ENCODE measurements at regions of chr1 and their contacts with region 1.

Region 1: DNA sequence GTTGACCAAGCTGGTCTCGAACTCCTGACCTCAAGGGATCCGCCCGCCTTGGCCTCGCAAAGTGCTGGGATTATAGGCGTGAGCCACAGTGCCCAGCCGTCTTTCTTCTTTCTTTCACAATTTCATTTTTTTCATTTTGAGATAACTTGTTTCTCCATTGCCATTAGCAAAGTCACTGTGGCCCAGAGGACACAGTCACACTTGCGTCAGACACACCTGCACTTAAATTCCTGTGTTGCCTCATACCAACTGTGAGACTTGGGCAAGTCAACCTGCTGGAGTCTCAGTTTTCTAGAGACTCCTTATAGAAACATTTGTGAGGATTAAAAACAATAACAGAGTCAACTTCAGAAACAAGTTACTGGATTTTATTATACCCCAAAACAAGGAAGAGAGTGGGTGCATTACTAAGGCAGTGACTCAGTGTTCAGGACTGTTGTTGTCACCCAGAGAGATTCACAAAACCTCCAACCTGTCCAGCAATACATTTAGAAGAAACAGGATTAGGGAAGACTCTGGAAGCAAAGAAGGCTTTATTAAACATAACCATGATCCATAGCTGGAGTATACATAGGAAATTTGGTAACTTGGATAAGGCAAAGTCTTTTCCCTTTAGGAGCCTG is 2.6 kb downstream of the TEDDM1 start:
- DNase-seq: no peak
- ATAC-seq: no peak
- H3K4me3 ChIP-seq: no peak overlapping the region
- H3K27ac ChIP-seq: no peak overlapping the region
- H3K4me1 ChIP-seq: no peaks in the 10 kb centered on the region
- H3K27me3 ChIP-seq: no peaks in the 10 kb centered on the region
- CTCF ChIP-seq: no peak
- EP300 ChIP-seq: no peak
- POLR2A ChIP-seq: no peak
- RAD21 ChIP-seq: no peak

Region 2: DNA sequence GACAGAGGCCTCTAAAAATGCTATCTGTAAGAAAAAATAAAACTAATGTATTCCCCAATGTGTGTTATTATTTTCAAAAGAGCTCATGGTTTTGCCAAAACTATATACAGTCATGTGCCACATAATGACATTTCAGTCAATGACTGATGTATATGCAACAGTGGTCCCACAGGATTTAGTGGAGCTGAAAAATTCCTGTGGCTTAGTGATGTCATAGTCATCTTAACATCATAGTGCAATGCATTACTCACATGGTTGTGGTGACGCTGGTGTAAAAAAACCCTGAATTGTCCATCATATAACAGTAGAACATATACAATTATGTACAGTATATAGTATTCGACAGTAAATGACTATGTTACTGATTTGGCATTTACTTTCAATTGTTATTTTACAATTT is 742.1 kb before region 1 on chr1:
- CTCF ChIA-PET with region 1: no interaction called
- POLR2A ChIA-PET with region 1: no interaction called
- RAD21 ChIA-PET with region 1: no interaction called
- SMC1A ChIA-PET with region 1: no interaction called
- in situ Hi-C with region 1: no loop called
- intact Hi-C with region 1: no loop called
- DNase-seq: no peak
- ATAC-seq: peak; percentile 38
- H3K4me3 ChIP-seq: no peak overlapping the region
- H3K27ac ChIP-seq: no peak overlapping the region
- H3K4me1 ChIP-seq: no peaks in the 10 kb centered on the region
- H3K27me3 ChIP-seq: no peaks in the 10 kb centered on the region
- CTCF ChIP-seq: no peak
- EP300 ChIP-seq: no peak
- POLR2A ChIP-seq: no peak
- RAD21 ChIP-seq: no peak

Region 3: GRCh38 chr1:182084487-182085316 is 313.2 kb before region 1 on chr1:
- CTCF ChIA-PET with region 1: interaction called, 64 read pairs
- POLR2A ChIA-PET with region 1: no interaction called
- RAD21 ChIA-PET with region 1: interaction called, 17 read pairs
- SMC1A ChIA-PET with region 1: interaction called, 22 read pairs
- in situ Hi-C with region 1: loop called (anchors 5 kb)
- intact Hi-C with region 1: loop called (anchors 1 kb)
- DNase-seq: no peak
- ATAC-seq: peak; percentile 94
- H3K4me3 ChIP-seq: no peak overlapping the region
- H3K27ac ChIP-seq: no peak overlapping the region
- H3K4me1 ChIP-seq: no peaks in the 10 kb centered on the region
- H3K27me3 ChIP-seq: no peaks in the 10 kb centered on the region
- CTCF ChIP-seq: peak; percentile 67 to 75 (median 74)
- EP300 ChIP-seq: no peak
- POLR2A ChIP-seq: no peak
- RAD21 ChIP-seq: peak; percentile 89

Region 4: DNA sequence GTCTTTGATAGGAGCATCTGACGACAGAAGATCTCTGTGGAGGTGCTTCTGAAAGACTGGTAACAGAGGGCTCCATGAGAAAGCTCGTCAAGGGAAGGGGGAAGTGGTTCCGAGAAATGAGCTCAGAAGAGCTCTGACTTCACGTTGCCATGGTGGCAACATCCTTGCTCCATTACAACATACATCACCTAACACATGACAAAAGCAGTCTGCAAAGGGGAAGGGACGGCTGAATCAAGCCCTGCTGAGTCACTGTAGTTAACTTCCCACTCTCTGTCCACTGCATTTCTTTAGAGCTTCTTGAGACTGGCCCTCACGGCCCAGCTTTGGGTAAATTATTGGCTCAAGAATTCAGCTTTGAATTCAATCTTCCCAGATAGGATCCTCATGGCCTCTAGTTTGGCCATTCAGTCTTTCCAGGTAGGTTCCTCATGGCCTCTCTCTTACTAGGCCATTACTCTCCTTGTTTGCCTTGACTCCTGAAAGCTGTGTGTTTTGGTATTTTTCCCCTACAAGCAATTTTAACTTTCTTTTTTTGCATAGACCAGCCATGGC is 248.4 kb before region 1 on chr1:
- CTCF ChIA-PET with region 1: interaction called, 418 read pairs
- POLR2A ChIA-PET with region 1: interaction called, 24 read pairs
- RAD21 ChIA-PET with region 1: interaction called, 282 read pairs
- SMC1A ChIA-PET with region 1: interaction called, 303 read pairs
- in situ Hi-C with region 1: loop called (anchors 5 kb)
- intact Hi-C with region 1: no loop called
- DNase-seq: no peak
- ATAC-seq: peak; percentile 29
- H3K4me3 ChIP-seq: no peak overlapping the region
- H3K27ac ChIP-seq: no peak overlapping the region
- H3K4me1 ChIP-seq: peaks cover 9% of the 10 kb centered on the region
- H3K27me3 ChIP-seq: no peaks in the 10 kb centered on the region
- CTCF ChIP-seq: no peak
- EP300 ChIP-seq: no peak
- POLR2A ChIP-seq: no peak
- RAD21 ChIP-seq: no peak

Region 5: DNA sequence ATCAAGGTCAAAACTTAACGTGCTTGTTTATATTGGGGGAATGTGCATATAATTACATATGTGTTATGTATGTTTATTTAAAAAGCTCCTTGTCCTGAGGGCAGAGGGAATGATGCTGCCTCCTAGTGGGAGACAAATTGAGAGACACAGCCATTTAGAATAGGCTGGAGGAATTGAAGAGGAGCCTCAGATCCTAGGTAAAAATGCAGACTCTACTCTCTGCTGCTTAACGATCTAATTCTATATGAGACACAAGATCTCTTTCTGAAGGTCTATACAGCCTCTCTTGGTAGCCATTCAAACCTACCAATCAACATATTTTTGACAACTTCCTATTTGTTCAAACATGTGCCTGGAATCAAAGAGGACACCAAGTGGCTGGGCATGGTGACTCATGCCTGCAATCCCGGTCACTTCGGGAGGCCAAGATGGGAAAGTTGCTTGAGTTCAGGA is 199.8 kb before region 1 on chr1:
- CTCF ChIA-PET with region 1: interaction called, 26 read pairs
- POLR2A ChIA-PET with region 1: no interaction called
- RAD21 ChIA-PET with region 1: interaction called, 23 read pairs
- SMC1A ChIA-PET with region 1: interaction called, 17 read pairs
- in situ Hi-C with region 1: no loop called
- intact Hi-C with region 1: no loop called
- DNase-seq: no peak
- ATAC-seq: peak; percentile 32; the same call in 1 of the 3 replicates
- H3K4me3 ChIP-seq: no peak overlapping the region
- H3K27ac ChIP-seq: no peak overlapping the region
- H3K4me1 ChIP-seq: no peaks in the 10 kb centered on the region
- H3K27me3 ChIP-seq: peaks cover 0 to 3% of the 10 kb centered on the region in 2 experiments; a peak in 1 of 4 replicates
- CTCF ChIP-seq: peak; percentile 25 to 46 (median 35); a peak in 5 of 6 replicates
- EP300 ChIP-seq: no peak
- POLR2A ChIP-seq: no peak
- RAD21 ChIP-seq: peak; percentile 60

Region 6: DNA sequence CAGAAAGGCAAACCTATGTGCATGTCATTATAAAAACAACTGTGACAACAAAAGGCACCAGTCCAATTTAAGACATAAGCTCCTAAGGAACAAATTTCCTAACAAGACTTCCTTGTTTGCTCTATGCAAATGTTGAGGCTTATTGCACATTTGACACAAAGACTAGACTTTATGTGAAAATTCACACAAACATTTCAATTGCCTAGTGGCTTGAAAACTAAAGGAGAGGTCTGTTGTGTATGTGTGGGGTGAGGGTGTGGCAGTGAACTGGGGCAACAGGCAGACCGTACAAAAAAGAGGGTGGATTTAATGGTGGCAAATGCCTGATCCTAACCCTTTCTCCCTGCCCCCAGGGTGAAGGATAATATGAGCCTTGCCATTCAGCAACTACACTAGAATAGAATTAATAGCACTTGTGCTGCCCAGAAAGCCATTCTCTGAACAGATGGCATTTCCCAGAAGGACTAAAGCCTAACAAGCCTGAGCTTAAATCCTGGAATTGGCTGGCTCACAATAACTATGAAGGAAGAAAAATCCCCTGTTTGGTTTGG is 80.2 kb before region 1 on chr1:
- CTCF ChIA-PET with region 1: interaction called, 33 read pairs
- POLR2A ChIA-PET with region 1: no interaction called
- RAD21 ChIA-PET with region 1: interaction called, 30 read pairs
- SMC1A ChIA-PET with region 1: interaction called, 24 read pairs
- in situ Hi-C with region 1: no loop called
- intact Hi-C with region 1: loop called (anchors 5 kb)
- DNase-seq: no peak
- ATAC-seq: no peak
- H3K4me3 ChIP-seq: no peak overlapping the region
- H3K27ac ChIP-seq: no peak overlapping the region
- H3K4me1 ChIP-seq: no peaks in the 10 kb centered on the region
- H3K27me3 ChIP-seq: no peaks in the 10 kb centered on the region
- CTCF ChIP-seq: no peak
- EP300 ChIP-seq: no peak
- POLR2A ChIP-seq: no peak
- RAD21 ChIP-seq: no peak

Region 7: GRCh38 chr1:182430263-182431068 is 32.6 kb after region 1 on chr1:
- CTCF ChIA-PET with region 1: interaction called, 16 read pairs
- POLR2A ChIA-PET with region 1: interaction called, 4 read pairs
- RAD21 ChIA-PET with region 1: interaction called, 30 read pairs
- SMC1A ChIA-PET with region 1: interaction called, 14 read pairs
- in situ Hi-C with region 1: no loop called
- intact Hi-C with region 1: no loop called
- DNase-seq: peak; percentile 50
- ATAC-seq: peak; percentile 52
- H3K4me3 ChIP-seq: no peak overlapping the region
- H3K27ac ChIP-seq: peak overlapping the region; percentile 48
- H3K4me1 ChIP-seq: peaks cover 34% of the 10 kb centered on the region
- H3K27me3 ChIP-seq: no peaks in the 10 kb centered on the region
- CTCF ChIP-seq: no peak
- EP300 ChIP-seq: 0 out of 4 replicates have a peak, but pooled peaks of 1 of the 2 experiments have one; percentile 26
- POLR2A ChIP-seq: no peak
- RAD21 ChIP-seq: no peak

Measured in GM12878 (cell line).